Naive thymus-derived CD4-positive, alpha-beta T cell (primary cell): ENCODE measurements at regions of chr16 and their contacts with region 1.

Region 1: GRCh38 chr16:74813109-74813641 is 38.6 kb upstream of the FA2H start:
- DNase-seq: peak; percentile 26 to 79 (median 61)
- ATAC-seq: peak; percentile 99
- H3K4me3 ChIP-seq: no peak overlapping the region
- H3K4me3 Mint-ChIP-seq: peak overlapping the region in 3 of 10 donors; percentile 15 to 30 (median 21)
- H3K27ac ChIP-seq: no peak overlapping the region
- H3K27ac Mint-ChIP-seq: no peak overlapping the region
- H3K4me1 ChIP-seq: no peaks in the 10 kb centered on the region
- H3K4me1 Mint-ChIP-seq: peaks cover 0 to 5% (median 0%) of the 10 kb centered on the region in 7 donors
- H3K27me3 ChIP-seq: no peaks in the 10 kb centered on the region
- H3K27me3 Mint-ChIP-seq: peaks cover 0 to 12% (median 0%) of the 10 kb centered on the region in 5 donors

Region 2: DNA sequence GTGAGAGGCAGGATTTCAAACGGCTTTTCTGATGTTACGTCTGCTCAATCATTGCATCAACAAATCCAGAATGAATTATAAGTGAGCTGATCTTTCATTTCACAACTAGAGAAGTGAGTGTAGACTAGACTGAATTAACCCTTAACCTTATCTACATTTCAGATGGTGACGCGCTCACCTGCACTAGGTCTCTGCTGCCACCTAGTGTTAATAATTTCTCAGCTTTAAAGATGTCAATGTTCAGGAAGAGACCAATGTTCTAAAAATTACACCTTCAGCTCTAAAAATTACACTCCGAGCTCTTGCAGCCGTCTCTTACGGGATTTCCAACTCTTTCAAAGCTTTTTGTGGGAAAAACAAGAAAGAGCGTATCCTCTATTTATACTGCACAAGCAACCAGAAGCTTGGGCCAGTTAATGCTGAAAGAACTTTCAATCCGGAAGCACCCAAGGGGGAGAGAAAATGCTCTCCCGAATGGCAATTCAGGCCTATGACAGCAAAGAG is 49.6 kb after region 1 on chr16:
- CTCF ChIA-PET with region 1: interaction called, 15 read pairs
- POLR2A ChIA-PET with region 1: no interaction called
- intact Hi-C with region 1: loop called (anchors 1 kb)
- DNase-seq: peak in 6 of 9 donors; percentile 16 to 40 (median 30)
- ATAC-seq: peak; percentile 57
- H3K4me3 ChIP-seq: no peak overlapping the region
- H3K4me3 Mint-ChIP-seq: no peak overlapping the region
- H3K27ac ChIP-seq: no peak overlapping the region
- H3K27ac Mint-ChIP-seq: peak overlapping the region in 1 of 9 donors; percentile 55
- H3K4me1 ChIP-seq: peaks cover 0 to 7% of the 10 kb centered on the region in 2 donors
- H3K4me1 Mint-ChIP-seq: peaks cover 7 to 19% (median 11%) of the 10 kb centered on the region in 7 donors
- H3K27me3 ChIP-seq: no peaks in the 10 kb centered on the region
- H3K27me3 Mint-ChIP-seq: peaks cover 0 to 5% (median 0%) of the 10 kb centered on the region in 5 donors

Region 3: DNA sequence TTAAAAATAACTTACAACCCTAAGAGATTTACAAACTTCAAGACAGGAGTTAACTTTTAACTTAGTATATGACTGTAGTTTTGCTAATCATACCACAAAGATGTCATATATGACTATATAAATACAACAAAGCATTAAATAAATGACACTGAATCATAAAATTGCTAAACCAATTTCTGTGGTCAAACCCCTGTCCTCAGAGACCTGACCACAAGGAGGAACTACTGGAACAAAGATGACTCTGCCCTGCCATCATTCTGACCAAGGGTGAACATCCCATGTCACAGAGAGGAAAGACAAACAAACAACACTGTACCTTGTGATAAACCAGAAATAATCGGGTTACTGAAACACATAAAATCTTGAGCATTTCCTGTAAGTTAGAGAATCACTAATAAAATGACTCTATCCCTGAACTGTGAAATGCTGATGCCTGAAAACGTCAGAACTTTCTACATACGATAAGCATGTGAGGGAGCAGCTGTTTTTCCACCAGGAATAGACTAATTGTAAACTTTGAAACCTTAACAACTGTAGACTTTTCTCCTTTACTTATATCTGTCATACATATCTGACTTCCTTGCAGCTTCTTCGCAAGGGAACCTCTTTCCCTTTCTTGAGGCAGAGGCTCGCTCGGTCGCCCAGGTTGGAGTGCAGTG is 123.9 kb after region 1 on chr16:
- CTCF ChIA-PET with region 1: no interaction called
- POLR2A ChIA-PET with region 1: no interaction called
- intact Hi-C with region 1: loop called in 1 of 2 experiments (anchors 10 kb)
- DNase-seq: no peak
- ATAC-seq: peak; percentile 93
- H3K4me3 ChIP-seq: no peak overlapping the region
- H3K4me3 Mint-ChIP-seq: no peak overlapping the region
- H3K27ac ChIP-seq: no peak overlapping the region
- H3K27ac Mint-ChIP-seq: no peak overlapping the region
- H3K4me1 ChIP-seq: no peaks in the 10 kb centered on the region
- H3K4me1 Mint-ChIP-seq: peaks cover 0 to 4% (median 0%) of the 10 kb centered on the region in 7 donors
- H3K27me3 ChIP-seq: no peaks in the 10 kb centered on the region
- H3K27me3 Mint-ChIP-seq: no peaks in the 10 kb centered on the region